Lower leg skin (tissue), 4 donors: ENCODE measurements at regions of chr16 and their contacts with region 1.

Region 1: DNA sequence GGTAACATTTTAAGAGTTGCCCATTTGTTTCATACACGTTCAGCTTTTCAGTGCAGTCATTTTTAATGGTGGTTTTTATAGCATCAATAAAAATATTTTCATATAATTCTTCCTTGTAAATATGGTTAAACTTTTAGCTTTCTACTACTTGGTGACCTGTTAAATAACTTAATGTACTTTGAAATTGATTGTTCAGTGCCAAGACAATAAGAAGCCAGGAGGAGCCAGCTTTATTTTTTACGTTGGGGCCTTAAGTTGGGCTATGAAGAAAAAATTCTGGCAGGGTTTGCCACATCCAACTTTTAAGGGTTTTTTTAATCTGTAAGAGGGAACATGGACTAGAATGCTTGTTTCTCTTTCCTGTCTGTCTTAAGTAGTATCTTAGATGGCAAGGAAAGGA is 284.2 kb downstream of the FTO start:
- DNase-seq: no peak
- H3K4me3 ChIP-seq: no peak overlapping the region
- CTCF ChIP-seq: no peak
- POLR2A ChIP-seq: no peak

Region 2: DNA sequence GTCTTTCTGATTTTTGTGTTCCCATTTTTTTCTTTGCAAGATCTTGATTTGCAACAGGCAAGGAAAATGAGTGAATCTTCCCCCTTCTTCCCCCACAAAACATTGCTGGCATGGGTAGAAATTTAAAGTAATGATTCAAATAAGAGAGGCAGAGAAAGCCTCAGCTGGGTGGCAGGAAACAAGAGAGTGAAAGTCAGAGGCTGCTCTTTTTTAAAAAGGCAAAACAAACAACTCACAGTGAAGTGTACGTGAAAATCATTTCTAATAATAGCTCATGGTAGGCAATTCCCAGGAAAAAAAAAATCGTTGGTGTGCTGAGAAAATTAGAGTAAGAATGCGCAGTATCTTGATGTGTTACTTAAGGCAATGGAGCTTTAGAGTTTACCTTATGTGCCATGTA is 54.7 kb before region 1 on chr16:
- intact Hi-C with region 1: loop called (anchors 2 kb)
- DNase-seq: no peak
- H3K4me3 ChIP-seq: no peak overlapping the region
- CTCF ChIP-seq: no peak
- POLR2A ChIP-seq: no peak